ENCODE measurements at regions of chr1 and their contacts with region 1.

Region 1: GRCh38 chr1:32716312-32717148 is 14.0 kb upstream of the SYNC start:
- DNase-seq: peak; percentile 97
- H3K27ac ChIP-seq: peak overlapping the region; percentile 73
- CTCF ChIP-seq: no peak

Region 2: DNA sequence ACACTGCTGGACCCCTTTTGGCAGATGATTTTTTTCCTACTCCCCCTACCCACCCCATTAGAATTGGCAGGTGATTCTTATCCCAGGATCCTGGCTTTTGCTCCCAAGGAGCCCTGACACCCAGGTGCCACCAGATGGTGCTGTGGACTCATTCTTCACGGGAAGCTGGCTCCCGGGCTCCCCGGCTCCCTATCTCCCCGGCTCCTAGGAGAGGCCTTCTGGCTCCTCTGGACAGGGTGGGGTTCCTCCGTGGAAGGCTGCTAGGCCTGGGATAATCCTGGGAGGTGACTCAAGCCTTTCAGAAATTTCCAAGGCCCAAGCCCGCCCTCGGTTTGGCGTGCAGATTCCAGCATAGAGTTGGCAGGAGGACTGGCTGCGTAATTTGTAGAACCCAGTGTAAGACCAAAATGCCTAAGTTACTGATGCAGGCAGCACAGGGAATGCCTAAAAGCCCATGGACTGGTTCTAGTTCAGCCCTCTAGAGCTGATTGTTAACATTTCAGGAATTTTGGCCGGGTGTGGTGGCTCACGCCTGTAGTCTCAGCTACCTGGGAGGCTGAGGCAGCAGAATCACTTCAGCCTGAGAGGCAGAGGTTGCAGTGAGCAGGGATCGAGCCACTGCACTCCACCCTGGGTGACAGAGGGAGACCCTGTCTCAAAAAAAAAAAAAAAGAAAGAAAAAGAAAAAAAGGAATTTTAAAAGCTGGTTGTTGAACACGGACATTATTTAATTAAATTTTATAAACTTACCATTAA is 315.5 kb before region 1 on chr1:
- CTCF ChIA-PET with region 1: interaction called, 13 read pairs
- POLR2A ChIA-PET with region 1: no interaction called
- DNase-seq: peak; percentile 90
- H3K27ac ChIP-seq: peak overlapping the region; percentile 81
- CTCF ChIP-seq: peak; percentile 91

Region 3: GRCh38 chr1:32676945-32677344 is 39.6 kb before region 1 on chr1:
- CTCF ChIA-PET with region 1: no interaction called
- POLR2A ChIA-PET with region 1: no interaction called
- DNase-seq: no peak
- H3K27ac ChIP-seq: no peak overlapping the region
- CTCF ChIP-seq: no peak

Region 4: GRCh38 chr1:32729254-32730046 is 12.9 kb after region 1 on chr1:
- CTCF ChIA-PET with region 1: interaction called, 24 read pairs
- POLR2A ChIA-PET with region 1: no interaction called
- DNase-seq: no peak
- H3K27ac ChIP-seq: peak overlapping the region; percentile 60
- CTCF ChIP-seq: no peak

Region 5: GRCh38 chr1:32753532-32754312 is 37.2 kb after region 1 on chr1:
- CTCF ChIA-PET with region 1: interaction called, 18 read pairs
- POLR2A ChIA-PET with region 1: interaction called, 3 read pairs
- DNase-seq: peak; percentile 94
- H3K27ac ChIP-seq: peak overlapping the region; percentile 100
- CTCF ChIP-seq: no peak

Region 6: GRCh38 chr1:32786856-32787255 is 70.3 kb after region 1 on chr1:
- CTCF ChIA-PET with region 1: interaction called, 10 read pairs
- POLR2A ChIA-PET with region 1: no interaction called
- DNase-seq: no peak
- H3K27ac ChIP-seq: peak overlapping the region; percentile 57
- CTCF ChIP-seq: no peak

Region 7: GRCh38 chr1:32881871-32882850 is 165.6 kb after region 1 on chr1:
- CTCF ChIA-PET with region 1: no interaction called
- POLR2A ChIA-PET with region 1: no interaction called
- DNase-seq: no peak
- H3K27ac ChIP-seq: no peak overlapping the region
- CTCF ChIP-seq: no peak

Region 8: DNA sequence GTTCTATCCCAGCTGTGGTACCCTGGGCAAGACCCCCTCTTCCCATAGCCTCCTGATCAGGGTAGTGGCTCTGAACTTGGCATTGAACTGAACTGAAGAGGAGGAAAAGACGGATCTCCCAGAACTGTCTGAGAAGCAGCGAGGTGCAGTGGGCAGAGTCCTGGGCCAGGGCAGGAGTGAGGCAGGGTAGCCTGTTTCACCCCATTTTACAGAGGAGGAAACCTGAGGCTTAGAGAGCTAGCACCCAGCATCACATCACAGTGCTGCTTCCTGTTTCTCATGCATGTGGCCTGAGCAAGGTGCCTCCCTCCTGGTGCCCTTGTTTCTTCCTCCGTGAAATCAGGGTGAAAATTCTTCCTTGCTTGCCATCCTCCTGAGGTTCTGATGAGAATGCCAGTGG is 556.9 kb after region 1 on chr1:
- CTCF ChIA-PET with region 1: no interaction called
- POLR2A ChIA-PET with region 1: no interaction called
- DNase-seq: no peak
- H3K27ac ChIP-seq: no peak overlapping the region
- CTCF ChIP-seq: no peak

Measured in RWPE1 (cell line).